Mammary epithelial cell (primary cell): ENCODE measurements at regions of chr16 and their contacts with region 1.

Region 1: GRCh38 chr16:20300312-20301097 is 26.8 kb downstream of the GP2 start:
- DNase-seq: peak; percentile 42
- H3K4me3 ChIP-seq: no peak overlapping the region
- H3K27ac ChIP-seq: no peak overlapping the region
- H3K4me1 ChIP-seq: no peaks in the 10 kb centered on the region
- H3K27me3 ChIP-seq: no peaks in the 10 kb centered on the region
- CTCF ChIP-seq: peak; percentile 70 to 86

Region 2: GRCh38 chr16:19898924-19899604 is 401.4 kb before region 1 on chr16:
- CTCF ChIA-PET with region 1: interaction called, 47 read pairs
- dilution Hi-C with region 1: loop called (anchors 25 kb)
- in situ Hi-C with region 1: loop called in 1 of 2 experiments (anchors 25 kb)
- intact Hi-C with region 1: no loop called
- DNase-seq: peak; percentile 46
- H3K4me3 ChIP-seq: no peak overlapping the region
- H3K27ac ChIP-seq: no peak overlapping the region
- H3K4me1 ChIP-seq: peaks cover 4% of the 10 kb centered on the region
- H3K27me3 ChIP-seq: no peaks in the 10 kb centered on the region
- CTCF ChIP-seq: peak; percentile 78 to 82

Region 3: DNA sequence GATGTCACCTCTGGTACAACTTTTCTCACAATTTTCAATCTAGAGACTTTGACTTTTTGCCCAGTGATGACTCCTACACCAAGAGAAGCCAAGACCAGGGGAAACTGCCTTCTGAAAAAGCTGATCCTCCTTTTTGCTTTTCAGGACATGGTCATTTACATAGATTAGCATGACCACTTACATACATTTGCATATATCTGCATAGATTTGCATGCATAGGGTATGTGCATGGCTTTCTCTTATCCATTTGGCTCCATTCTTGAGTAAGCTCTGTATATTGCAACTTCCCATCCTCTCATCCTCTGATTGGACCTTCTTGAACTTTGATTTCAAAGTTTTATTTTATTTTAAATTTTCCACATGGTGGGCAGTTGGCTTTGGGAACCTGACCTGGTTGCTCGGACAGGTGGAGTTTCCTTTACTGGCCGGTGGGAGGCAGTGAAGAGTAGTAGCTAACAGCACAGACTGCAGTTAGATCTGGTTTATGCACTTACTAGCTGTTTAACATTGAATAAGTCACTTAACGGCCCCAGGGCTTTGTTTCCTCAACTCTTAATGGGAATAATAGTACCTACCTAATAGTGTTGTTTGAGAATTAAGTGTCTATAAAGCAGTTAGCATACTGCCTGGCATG is 319.8 kb before region 1 on chr16:
- CTCF ChIA-PET with region 1: no interaction called
- dilution Hi-C with region 1: no loop called
- in situ Hi-C with region 1: no loop called
- intact Hi-C with region 1: loop called (anchors 5 kb)
- DNase-seq: peak; percentile 1
- H3K4me3 ChIP-seq: no peak overlapping the region
- H3K27ac ChIP-seq: no peak overlapping the region
- H3K4me1 ChIP-seq: no peaks in the 10 kb centered on the region
- H3K27me3 ChIP-seq: peaks cover 3% of the 10 kb centered on the region
- CTCF ChIP-seq: peak in 1 of 2 donors; percentile 31

Region 4: GRCh38 chr16:20393801-20394577 is 93.5 kb after region 1 on chr16:
- CTCF ChIA-PET with region 1: no interaction called
- dilution Hi-C with region 1: no loop called
- in situ Hi-C with region 1: no loop called
- intact Hi-C with region 1: no loop called
- DNase-seq: no peak
- H3K4me3 ChIP-seq: no peak overlapping the region
- H3K27ac ChIP-seq: no peak overlapping the region
- H3K4me1 ChIP-seq: no peaks in the 10 kb centered on the region
- H3K27me3 ChIP-seq: no peaks in the 10 kb centered on the region
- CTCF ChIP-seq: no peak